Posterior vena cava (tissue), 2 donors: ENCODE measurements at regions of chr10 and their contacts with region 1.

Region 1: GRCh38 chr10:75326306-75326705 is 75.3 kb downstream of the ZNF503 start:
- DNase-seq: no peak

Region 2: GRCh38 chr10:75283671-75284470 is 42.4 kb before region 1 on chr10:
- intact Hi-C with region 1: loop called in 1 of 2 experiments (anchors 2 kb)
- DNase-seq: no peak